ENCODE measurements at regions of chr6 and their contacts with region 1.

Region 1: DNA sequence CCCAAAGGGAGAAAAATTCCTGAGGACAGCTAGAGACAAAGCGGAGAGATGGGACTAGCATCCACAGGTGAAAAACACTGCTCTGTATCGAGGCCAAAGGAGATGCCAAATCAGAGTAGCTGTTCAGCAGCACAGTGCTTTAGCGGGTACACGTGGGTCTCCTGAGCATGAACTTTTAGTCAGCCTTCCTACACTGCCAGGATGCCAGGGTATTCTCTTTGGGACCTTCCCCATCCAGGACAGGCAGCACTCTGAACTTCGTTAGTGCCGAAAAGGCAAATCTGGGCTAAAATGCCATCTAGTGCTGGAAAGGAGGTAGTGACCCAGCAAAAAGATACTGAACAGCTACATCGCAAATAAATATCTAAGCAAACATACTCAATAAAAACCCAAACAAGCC is 64.9 kb downstream of the C6orf58 start:
- DNase-seq: peak; percentile 55
- H3K4me3 Mint-ChIP-seq: no peak overlapping the region
- H3K27ac Mint-ChIP-seq: no peak overlapping the region
- H3K4me1 Mint-ChIP-seq: no peaks in the 10 kb centered on the region
- H3K27me3 Mint-ChIP-seq: peaks cover 54% of the 10 kb centered on the region
- CTCF ChIP-seq: peak; percentile 52

Region 2: DNA sequence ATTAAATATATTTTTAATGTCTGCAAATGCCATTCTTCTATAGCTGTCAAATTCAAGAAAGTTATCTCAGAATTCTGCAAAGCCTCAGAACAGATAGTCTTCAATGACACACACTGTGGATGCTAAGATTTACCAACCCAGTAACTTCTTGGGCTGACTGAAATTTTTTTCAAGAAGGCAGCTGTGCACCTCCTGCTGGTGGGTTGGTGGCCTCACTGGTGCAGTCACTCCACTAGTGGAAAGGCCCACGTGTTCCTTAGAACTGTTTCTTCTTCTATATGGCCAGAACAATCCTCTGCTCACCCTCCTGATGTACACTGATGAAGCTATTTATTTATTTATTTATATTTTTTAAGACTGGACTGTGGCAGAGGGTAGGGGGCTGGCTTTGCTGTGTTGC is 94.7 kb before region 1 on chr6:
- CTCF ChIA-PET with region 1: interaction called, 14 read pairs
- POLR2A ChIA-PET with region 1: no interaction called
- intact Hi-C with region 1: no loop called
- DNase-seq: no peak
- H3K4me3 Mint-ChIP-seq: no peak overlapping the region
- H3K27ac Mint-ChIP-seq: no peak overlapping the region
- H3K4me1 Mint-ChIP-seq: peaks cover 6% of the 10 kb centered on the region
- H3K27me3 Mint-ChIP-seq: peaks cover 22% of the 10 kb centered on the region
- CTCF ChIP-seq: no peak

Region 3: DNA sequence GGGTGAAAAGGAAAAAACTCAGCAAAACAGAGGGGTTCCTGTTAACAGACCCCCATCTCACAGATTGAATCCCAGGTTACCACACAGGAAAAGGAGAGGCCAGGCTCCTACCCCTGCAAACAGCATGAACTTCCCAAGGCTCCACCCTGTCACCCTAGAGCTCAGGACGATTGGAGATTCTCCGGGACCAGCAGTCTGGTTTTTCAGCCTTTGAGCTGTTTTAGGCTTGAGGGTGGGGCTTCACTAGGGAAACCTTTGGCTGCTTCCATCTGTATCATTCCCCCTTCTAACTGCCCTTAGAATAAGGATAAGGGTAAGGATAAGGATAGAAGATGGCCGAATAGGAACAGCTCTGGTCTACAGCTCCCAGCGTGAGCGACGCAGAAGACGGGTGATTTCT is 48.9 kb before region 1 on chr6:
- CTCF ChIA-PET with region 1: interaction called, 10 read pairs
- POLR2A ChIA-PET with region 1: no interaction called
- intact Hi-C with region 1: no loop called
- DNase-seq: no peak
- H3K4me3 Mint-ChIP-seq: no peak overlapping the region
- H3K27ac Mint-ChIP-seq: no peak overlapping the region
- H3K4me1 Mint-ChIP-seq: no peaks in the 10 kb centered on the region
- H3K27me3 Mint-ChIP-seq: no peaks in the 10 kb centered on the region
- CTCF ChIP-seq: no peak

Region 4: GRCh38 chr6:127618729-127619128 is 23.2 kb before region 1 on chr6:
- CTCF ChIA-PET with region 1: interaction called, 28 read pairs
- POLR2A ChIA-PET with region 1: no interaction called
- intact Hi-C with region 1: loop called (anchors 1 kb)
- DNase-seq: peak; percentile 83
- H3K4me3 Mint-ChIP-seq: no peak overlapping the region
- H3K27ac Mint-ChIP-seq: no peak overlapping the region
- H3K4me1 Mint-ChIP-seq: peaks cover 7% of the 10 kb centered on the region
- H3K27me3 Mint-ChIP-seq: no peaks in the 10 kb centered on the region
- CTCF ChIP-seq: no peak

Region 5: DNA sequence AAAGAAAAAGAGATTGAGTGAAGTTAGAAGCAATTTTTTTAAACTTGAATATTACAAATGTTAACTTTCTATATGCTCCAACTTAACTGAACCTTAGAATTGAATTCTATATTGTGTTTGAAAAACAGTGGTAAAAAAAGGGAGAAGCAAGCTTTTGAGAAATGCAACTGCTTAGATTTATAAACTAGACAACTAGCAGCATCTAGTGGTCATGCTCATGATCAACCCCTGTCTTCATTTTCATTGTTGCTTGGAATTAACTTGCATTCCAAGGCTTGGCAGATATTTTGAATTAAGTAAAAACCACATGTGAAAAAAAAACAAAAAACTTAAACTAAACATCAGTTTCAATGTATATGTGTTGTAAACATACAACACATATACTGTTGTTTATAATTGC is 48.2 kb after region 1 on chr6:
- CTCF ChIA-PET with region 1: interaction called, 17 read pairs
- POLR2A ChIA-PET with region 1: no interaction called
- intact Hi-C with region 1: no loop called
- DNase-seq: peak; percentile 32
- H3K4me3 Mint-ChIP-seq: no peak overlapping the region
- H3K27ac Mint-ChIP-seq: no peak overlapping the region
- H3K4me1 Mint-ChIP-seq: no peaks in the 10 kb centered on the region
- H3K27me3 Mint-ChIP-seq: peaks cover 59% of the 10 kb centered on the region
- CTCF ChIP-seq: peak; percentile 51

Region 6: GRCh38 chr6:128005009-128005408 is 363.1 kb after region 1 on chr6:
- CTCF ChIA-PET with region 1: no interaction called
- POLR2A ChIA-PET with region 1: no interaction called
- intact Hi-C with region 1: no loop called
- DNase-seq: peak; percentile 47
- H3K4me3 Mint-ChIP-seq: no peak overlapping the region
- H3K27ac Mint-ChIP-seq: no peak overlapping the region
- H3K4me1 Mint-ChIP-seq: no peaks in the 10 kb centered on the region
- H3K27me3 Mint-ChIP-seq: no peaks in the 10 kb centered on the region
- CTCF ChIP-seq: no peak

Measured in MCF 10A (cell line).